ENCODE measurements at regions of chr16 and their contacts with region 1.

Region 1: DNA sequence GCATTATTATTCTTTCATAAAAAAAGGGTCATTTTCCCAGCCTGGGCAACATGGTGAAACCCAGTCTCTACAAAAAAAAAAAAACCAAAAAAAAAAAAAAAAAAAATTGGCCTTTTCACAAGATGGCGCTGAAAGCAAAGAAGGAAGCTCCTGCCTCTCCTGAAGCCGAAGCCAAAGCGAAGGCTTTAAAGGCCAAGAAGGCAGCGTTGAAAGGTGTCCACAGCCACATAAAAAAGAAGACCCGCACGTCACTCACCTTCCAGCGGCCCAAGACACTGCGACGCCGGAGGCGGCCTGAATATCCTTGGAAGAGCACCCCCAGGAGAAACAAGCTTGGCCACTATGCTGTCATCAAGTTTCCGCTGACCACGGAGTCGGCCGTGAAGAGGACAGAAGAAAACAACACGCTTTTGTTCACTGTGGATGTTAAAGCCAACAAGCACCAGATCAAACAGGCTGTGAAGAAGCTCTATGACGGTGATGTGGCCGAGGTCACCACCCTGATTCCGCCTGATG is 4.9 kb upstream of the PGAP6 start:
- DNase-seq: no peak
- H3K4me3 Mint-ChIP-seq: no peak overlapping the region
- H3K27ac Mint-ChIP-seq: no peak overlapping the region
- H3K4me1 Mint-ChIP-seq: peaks cover 17% of the 10 kb centered on the region
- H3K27me3 Mint-ChIP-seq: peaks cover 4% of the 10 kb centered on the region

Region 2: DNA sequence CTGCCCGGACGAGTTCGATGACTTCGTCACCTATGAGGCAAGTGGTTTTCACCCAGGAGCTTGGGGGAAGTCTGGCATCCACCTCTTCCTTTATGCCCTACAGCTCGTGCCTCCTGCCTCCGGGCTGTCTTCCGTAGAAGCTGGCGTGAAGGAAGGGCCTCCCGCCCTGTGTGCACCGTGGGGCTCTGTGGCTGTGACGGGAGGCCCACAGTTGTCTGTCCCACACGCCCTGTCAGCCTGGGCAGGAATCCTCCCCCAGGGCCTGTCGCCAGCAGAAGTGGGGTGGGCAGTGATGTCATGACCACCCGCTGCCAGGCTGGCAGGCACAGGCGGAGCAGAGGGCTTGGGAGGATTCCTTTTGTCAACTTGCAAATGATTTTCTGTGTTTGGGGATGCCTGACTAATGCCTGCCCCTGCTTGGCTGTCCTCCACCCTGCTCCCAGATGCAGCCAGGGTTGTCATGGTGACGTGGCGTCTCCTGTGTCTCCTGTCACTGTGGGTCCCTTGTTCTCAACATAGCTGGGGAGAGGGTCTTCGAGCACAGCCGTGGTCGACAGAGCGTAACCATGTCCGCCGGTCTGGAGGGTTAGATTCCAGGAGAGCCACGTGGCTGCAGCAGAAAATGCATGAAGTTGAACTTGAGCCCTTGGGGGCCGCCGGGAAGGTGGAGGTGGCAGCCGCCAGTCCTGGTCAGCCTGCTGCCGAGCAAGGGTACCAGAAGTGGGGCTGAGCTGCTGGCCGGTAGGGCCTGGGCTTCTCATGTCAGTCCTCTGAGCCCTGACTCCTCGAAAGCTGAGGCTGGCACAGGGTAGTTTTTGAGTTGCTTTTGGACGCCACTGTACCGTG is 84.9 kb after region 1 on chr16:
- CTCF ChIA-PET with region 1: no interaction called
- POLR2A ChIA-PET with region 1: no interaction called
- DNase-seq: no peak
- H3K4me3 Mint-ChIP-seq: no peak overlapping the region
- H3K27ac Mint-ChIP-seq: no peak overlapping the region
- H3K4me1 Mint-ChIP-seq: no peaks in the 10 kb centered on the region
- H3K27me3 Mint-ChIP-seq: no peaks in the 10 kb centered on the region

Region 3: GRCh38 chr16:586645-587590 is 200.2 kb after region 1 on chr16:
- CTCF ChIA-PET with region 1: no interaction called
- POLR2A ChIA-PET with region 1: interaction called, 10 read pairs
- DNase-seq: no peak
- H3K4me3 Mint-ChIP-seq: peak overlapping the region; percentile 94
- H3K27ac Mint-ChIP-seq: peak overlapping the region; percentile 98
- H3K4me1 Mint-ChIP-seq: peaks cover 28% of the 10 kb centered on the region
- H3K27me3 Mint-ChIP-seq: no peaks in the 10 kb centered on the region